ENCODE measurements at regions of chr5 and their contacts with region 1.

Region 1: DNA sequence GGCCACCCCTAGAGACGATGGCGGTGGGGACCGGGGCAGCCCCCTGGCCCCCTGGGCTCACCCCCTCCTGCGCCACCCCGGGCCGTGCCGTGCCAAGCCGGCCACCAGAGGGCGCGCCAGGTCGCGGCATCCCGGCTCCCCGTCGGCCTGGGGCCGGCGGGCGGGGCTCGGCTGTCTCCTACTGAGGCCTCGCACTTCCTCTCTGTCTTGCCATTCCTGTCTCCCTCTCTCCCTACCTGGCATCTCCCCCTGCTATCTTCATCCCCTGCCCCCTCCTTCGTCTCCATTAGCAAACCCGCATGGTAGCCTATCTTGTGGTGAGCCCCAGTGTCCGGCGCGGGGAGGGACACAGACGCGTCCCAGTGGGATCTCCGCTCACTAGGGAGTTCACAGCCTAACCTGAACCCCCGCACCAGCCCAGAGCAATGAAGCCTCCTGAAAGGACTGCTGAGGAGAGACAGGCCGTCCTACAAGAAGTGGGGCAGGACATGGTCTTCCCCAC is 29.8 kb upstream of the FABP6 start:
- H3K4me3 Mint-ChIP-seq: peak overlapping the region; percentile 60
- H3K27ac Mint-ChIP-seq: no peak overlapping the region
- H3K4me1 Mint-ChIP-seq: peaks cover 24% of the 10 kb centered on the region
- H3K27me3 Mint-ChIP-seq: peaks cover 26% of the 10 kb centered on the region

Region 2: DNA sequence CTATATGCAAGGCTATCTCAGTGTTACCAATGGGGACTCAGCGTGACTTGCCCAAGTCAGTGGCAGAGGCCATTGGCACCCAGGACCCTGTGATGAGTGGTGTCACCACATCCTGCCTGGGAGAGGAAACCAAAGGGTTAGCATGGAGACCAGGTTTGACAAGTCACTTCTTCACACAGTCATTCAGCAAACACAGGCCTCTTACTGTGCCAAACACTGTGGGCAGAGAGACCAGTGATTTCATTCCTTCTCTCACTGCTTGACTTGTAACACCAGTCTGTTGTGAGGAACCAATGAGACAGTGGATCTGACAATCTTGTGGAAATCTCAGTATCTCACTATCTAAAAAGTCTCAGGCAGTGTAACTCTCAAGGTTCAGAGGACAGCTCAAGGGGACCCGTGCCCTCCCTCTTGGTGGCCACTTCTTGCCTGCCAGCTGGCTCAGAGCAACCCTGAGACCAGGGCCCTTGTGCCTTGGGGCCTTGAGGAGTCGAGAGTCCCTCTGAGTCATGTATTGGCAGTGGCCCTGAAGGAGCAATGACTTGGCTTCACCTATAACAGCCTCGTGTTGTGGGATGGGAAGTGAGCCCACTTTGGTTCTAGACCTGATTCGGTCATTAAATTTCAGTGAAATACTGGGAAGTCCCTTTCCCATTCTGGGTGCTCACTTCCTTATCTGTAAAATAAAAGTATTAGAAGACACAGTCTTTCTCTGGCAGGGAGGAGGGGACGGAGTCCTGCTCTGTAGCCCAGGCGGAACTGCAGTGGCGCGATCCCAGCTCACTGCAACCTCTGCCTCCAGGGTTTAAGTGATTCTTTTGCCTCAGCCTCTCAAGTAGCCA is 31.4 kb after region 1 on chr5:
- intact Hi-C with region 1: no loop called
- H3K4me3 Mint-ChIP-seq: no peak overlapping the region
- H3K27ac Mint-ChIP-seq: peak overlapping the region; percentile 77
- H3K4me1 Mint-ChIP-seq: peaks cover 23% of the 10 kb centered on the region
- H3K27me3 Mint-ChIP-seq: peaks cover 5% of the 10 kb centered on the region

Region 3: GRCh38 chr5:160342403-160342941 is 143.0 kb after region 1 on chr5:
- intact Hi-C with region 1: loop called (anchors 1 kb)
- H3K4me3 Mint-ChIP-seq: no peak overlapping the region
- H3K27ac Mint-ChIP-seq: no peak overlapping the region
- H3K4me1 Mint-ChIP-seq: no peaks in the 10 kb centered on the region
- H3K27me3 Mint-ChIP-seq: peaks cover 9% of the 10 kb centered on the region

Measured in dendritic cell treated with granulocyte-macrophage colony-stimulating factor and Interleukin-4, amounts not matched to agents 40 ng/mL and 50 ng/mL, for 4 days (primary cell).